Colonic mucosa (tissue), 4 donors: ENCODE measurements at regions of chr20 and their contacts with region 1.

Region 1: GRCh38 chr20:17995967-17996819 is 27.4 kb downstream of the MGME1 start:
- DNase-seq: peak; percentile 60
- H3K4me3 ChIP-seq: no peak overlapping the region
- H3K27ac ChIP-seq: no peak overlapping the region
- H3K4me1 ChIP-seq: no peaks in the 10 kb centered on the region
- H3K27me3 ChIP-seq: no peaks in the 10 kb centered on the region
- CTCF ChIP-seq: peak; percentile 99

Region 2: DNA sequence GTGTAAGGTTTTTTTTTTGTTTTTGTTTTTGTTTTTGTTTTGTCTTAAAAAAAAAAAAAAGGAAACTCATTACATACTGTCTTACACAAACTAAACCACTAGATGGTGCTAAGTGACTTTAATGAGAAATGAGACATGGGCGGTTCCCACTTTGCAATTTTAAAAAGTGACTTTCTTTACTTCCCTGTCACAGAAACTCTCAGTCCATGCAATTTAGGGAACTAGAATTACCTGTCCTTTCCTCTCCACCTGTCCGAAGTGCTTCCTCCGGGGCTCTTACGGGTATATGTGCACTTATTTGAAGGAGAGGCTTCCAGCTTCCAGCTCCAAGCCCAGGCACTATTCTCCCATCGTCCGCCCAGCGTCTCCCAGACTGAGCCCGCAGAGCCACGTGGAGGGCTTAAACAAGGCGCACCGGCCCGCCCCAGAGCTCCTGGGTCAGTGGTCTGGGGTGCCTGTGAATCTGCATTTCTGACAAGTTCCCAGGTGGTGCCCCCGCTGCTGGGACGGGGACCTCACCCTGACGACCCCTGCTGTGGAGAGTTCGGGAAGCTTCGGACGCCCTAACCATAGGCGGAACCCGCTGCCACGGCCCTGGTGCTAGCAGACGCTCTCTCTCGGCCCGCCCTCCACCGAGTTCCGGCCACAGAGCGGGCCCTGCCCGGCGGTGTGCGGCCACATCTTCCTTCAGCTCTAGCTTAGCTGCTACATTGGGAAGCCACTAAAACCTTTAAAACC is 491.1 kb before region 1 on chr20:
- intact Hi-C with region 1: loop called (anchors 10 kb)
- DNase-seq: peak; percentile 67
- H3K4me3 ChIP-seq: peak overlapping the region; percentile 50
- H3K27ac ChIP-seq: peak overlapping the region; percentile 21
- H3K4me1 ChIP-seq: no peaks in the 10 kb centered on the region
- H3K27me3 ChIP-seq: no peaks in the 10 kb centered on the region
- CTCF ChIP-seq: peak; percentile 56

Region 3: GRCh38 chr20:17536944-17537444 is 459.2 kb before region 1 on chr20:
- intact Hi-C with region 1: loop called (anchors 10 kb)
- DNase-seq: peak; percentile 79
- H3K4me3 ChIP-seq: no peak overlapping the region
- H3K27ac ChIP-seq: no peak overlapping the region
- H3K4me1 ChIP-seq: no peaks in the 10 kb centered on the region
- H3K27me3 ChIP-seq: no peaks in the 10 kb centered on the region
- CTCF ChIP-seq: peak; percentile 81

Region 4: GRCh38 chr20:17786221-17786718 is 209.9 kb before region 1 on chr20:
- intact Hi-C with region 1: no loop called
- DNase-seq: no peak
- H3K4me3 ChIP-seq: no peak overlapping the region
- H3K27ac ChIP-seq: no peak overlapping the region
- H3K4me1 ChIP-seq: no peaks in the 10 kb centered on the region
- H3K27me3 ChIP-seq: no peaks in the 10 kb centered on the region
- CTCF ChIP-seq: no peak